IMR-90 (cell line): ENCODE measurements at regions of chr15 and their contacts with region 1.

Region 1: GRCh38 chr15:59372352-59373211 is at the start of gene MYO1E:
- DNase-seq: peak; percentile 97
- ATAC-seq: peak; percentile 94
- H3K4me3 ChIP-seq: peak within 1 kb of the TSS; percentile 67
- H3K27ac ChIP-seq: peak within 1 kb of the TSS; percentile 88
- H3K4me1 ChIP-seq: peaks cover 3% of the 10 kb centered on the region; the same call in 1 of the 2 replicates
- H3K27me3 ChIP-seq: no peaks in the 10 kb centered on the region
- CTCF ChIP-seq: no peak
- POLR2A ChIP-seq: peak; percentile 88
- RAD21 ChIP-seq: no peak
- total RNA-seq, gene MYO1E: 35.8 and 37.3 TPM in 2 replicates

Region 2: DNA sequence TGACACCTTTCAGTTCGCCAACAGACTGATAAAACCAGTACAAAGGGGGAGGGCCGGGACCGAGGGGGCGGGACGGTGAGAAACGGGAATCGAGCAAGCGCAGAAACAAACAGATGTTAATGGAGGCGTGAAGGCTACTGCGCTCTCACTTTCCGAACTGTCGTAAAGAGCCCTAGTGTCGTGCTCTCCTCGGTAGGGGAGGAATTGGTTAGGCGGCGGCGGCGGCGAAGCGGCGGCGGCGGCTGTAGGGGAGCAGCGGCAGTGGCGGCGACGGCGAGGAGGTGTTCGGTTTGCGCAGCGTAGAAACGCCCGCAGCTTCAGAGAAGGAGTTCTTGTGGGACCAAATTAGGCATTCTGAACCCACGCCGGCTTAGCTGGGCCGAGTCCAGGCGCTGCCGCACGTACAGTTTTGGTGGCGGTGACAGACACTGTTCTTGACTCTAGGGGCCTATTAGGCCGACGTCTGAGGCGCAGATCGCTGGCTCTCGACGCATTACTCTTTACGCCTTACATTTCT is 385.0 kb before region 1 on chr15 and contains the start of gene RNF111:
- CTCF ChIA-PET with region 1: no interaction called
- POLR2A ChIA-PET with region 1: no interaction called
- dilution Hi-C with region 1: no loop called
- in situ Hi-C with region 1: no loop called
- intact Hi-C with region 1: loop called (anchors 10 kb)
- DNase-seq: peak; percentile 97
- ATAC-seq: peak; percentile 93
- H3K4me3 ChIP-seq: peak within 1 kb of the TSS; percentile 98
- H3K27ac ChIP-seq: peak within 1 kb of the TSS; percentile 97
- H3K4me1 ChIP-seq: no peaks in the 10 kb centered on the region
- H3K27me3 ChIP-seq: no peaks in the 10 kb centered on the region
- CTCF ChIP-seq: no peak
- POLR2A ChIP-seq: peak; percentile 29; the same call in 1 of the 2 replicates
- RAD21 ChIP-seq: no peak
- total RNA-seq, gene RNF111: 17.2 and 20.1 TPM in 2 replicates

Region 3: DNA sequence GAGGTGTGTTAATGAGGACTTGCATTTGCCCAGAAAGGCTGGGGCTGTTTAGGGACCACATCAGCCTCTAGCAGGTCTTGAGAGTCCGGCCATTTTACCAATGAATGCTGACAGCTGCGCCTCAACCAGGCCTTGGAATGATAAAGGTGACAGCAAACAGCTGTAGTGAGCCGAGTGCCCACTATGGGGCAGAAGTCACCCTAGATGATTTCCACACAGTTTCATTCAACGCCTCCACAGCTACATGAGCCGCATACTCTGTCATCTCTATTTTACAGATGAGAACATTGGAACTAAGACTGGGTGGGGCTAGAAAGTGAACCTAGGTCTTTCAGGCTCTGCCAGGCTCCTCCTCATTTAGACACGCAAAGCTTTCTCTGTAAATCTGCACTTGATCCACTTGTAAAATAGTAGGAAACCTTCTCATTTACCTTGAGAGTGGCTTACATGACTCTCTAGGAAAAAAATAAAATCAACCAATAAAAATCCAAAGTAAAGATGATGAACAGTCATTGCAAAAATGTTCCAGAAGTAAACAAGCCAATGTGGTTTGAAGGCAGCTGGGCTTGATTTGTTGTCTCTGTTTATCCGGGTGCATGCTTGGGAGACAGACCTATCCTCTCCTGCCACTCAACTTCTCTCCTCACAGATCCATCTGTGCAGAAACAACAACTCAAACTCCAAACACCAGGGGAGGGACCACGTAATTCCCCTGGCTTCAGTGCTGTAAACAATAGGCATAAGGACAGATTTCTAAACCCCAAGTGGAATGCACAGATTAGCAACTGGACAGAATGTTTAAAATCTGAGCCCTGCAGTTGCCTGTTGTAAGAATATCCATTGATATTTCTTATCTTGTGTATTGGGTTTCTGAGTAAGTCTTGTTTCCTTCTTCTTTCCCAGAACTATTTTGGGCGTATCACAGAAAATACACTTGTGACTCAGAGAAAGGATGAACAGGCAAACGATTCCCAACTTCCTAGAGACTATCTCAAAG is 197.4 kb before region 1 on chr15:
- CTCF ChIA-PET with region 1: no interaction called
- POLR2A ChIA-PET with region 1: no interaction called
- dilution Hi-C with region 1: no loop called
- in situ Hi-C with region 1: loop called (anchors 10 kb)
- intact Hi-C with region 1: loop called (anchors 1 kb)
- DNase-seq: peak; percentile 87
- ATAC-seq: peak; percentile 84
- H3K4me3 ChIP-seq: no peak overlapping the region
- H3K27ac ChIP-seq: peak overlapping the region; percentile 59; the same call in 1 of the 2 replicates
- H3K4me1 ChIP-seq: peaks cover 12% of the 10 kb centered on the region
- H3K27me3 ChIP-seq: no peaks in the 10 kb centered on the region
- CTCF ChIP-seq: peak; percentile 62
- POLR2A ChIP-seq: no peak
- RAD21 ChIP-seq: peak; percentile 59

Region 4: GRCh38 chr15:59247364-59247763 is 125.2 kb before region 1 on chr15:
- CTCF ChIA-PET with region 1: interaction called, 6 read pairs
- POLR2A ChIA-PET with region 1: interaction called, 7 read pairs
- dilution Hi-C with region 1: no loop called
- in situ Hi-C with region 1: no loop called
- intact Hi-C with region 1: loop called (anchors 1 kb)
- DNase-seq: peak; percentile 74
- ATAC-seq: peak; percentile 93
- H3K4me3 ChIP-seq: no peak overlapping the region
- H3K27ac ChIP-seq: no peak overlapping the region
- H3K4me1 ChIP-seq: no peaks in the 10 kb centered on the region
- H3K27me3 ChIP-seq: no peaks in the 10 kb centered on the region
- CTCF ChIP-seq: peak; percentile 59
- POLR2A ChIP-seq: no peak
- RAD21 ChIP-seq: peak; percentile 76

Region 5: GRCh38 chr15:59299929-59300617 is 72.5 kb before region 1 on chr15:
- CTCF ChIA-PET with region 1: no interaction called
- POLR2A ChIA-PET with region 1: no interaction called
- dilution Hi-C with region 1: no loop called
- in situ Hi-C with region 1: no loop called
- intact Hi-C with region 1: loop called (anchors 5 kb)
- DNase-seq: peak; percentile 97
- ATAC-seq: peak; percentile 87
- H3K4me3 ChIP-seq: no peak overlapping the region
- H3K27ac ChIP-seq: peak overlapping the region; percentile 47
- H3K4me1 ChIP-seq: peaks cover 26% of the 10 kb centered on the region
- H3K27me3 ChIP-seq: no peaks in the 10 kb centered on the region
- CTCF ChIP-seq: no peak
- POLR2A ChIP-seq: no peak
- RAD21 ChIP-seq: 0 out of 2 replicates have a peak, but pooled peaks have one; percentile 14

Region 6: DNA sequence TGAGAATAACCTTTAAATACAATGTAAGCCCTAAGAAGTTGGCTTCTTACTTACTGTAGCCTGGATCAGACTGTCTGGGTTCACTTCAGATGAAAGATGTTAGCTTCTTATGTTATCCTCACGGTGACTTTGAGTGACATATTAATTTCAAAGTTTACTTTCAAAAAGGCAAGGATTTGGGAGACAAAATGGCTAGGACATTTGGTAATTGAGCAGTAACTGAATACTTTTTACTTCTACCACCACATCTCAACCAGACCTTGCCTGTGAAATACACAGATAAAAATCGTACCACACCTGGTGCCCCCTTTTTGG is 352.5 kb after region 1 on chr15:
- CTCF ChIA-PET with region 1: no interaction called
- POLR2A ChIA-PET with region 1: no interaction called
- dilution Hi-C with region 1: no loop called
- in situ Hi-C with region 1: no loop called
- intact Hi-C with region 1: no loop called
- DNase-seq: no peak
- ATAC-seq: no peak
- H3K4me3 ChIP-seq: no peak overlapping the region
- H3K27ac ChIP-seq: no peak overlapping the region
- H3K4me1 ChIP-seq: no peaks in the 10 kb centered on the region
- H3K27me3 ChIP-seq: peaks cover 24% of the 10 kb centered on the region
- CTCF ChIP-seq: no peak
- POLR2A ChIP-seq: no peak
- RAD21 ChIP-seq: no peak